Activated CD4-positive, alpha-beta memory T cell treated with anti-CD3 and anti-CD28 coated beads, Interleukin-2, amount 10 ng/mL, durations not matched to agents 7 days and 5 days (primary cell): ENCODE measurements at regions of chr11 and their contacts with region 1.

Region 1: DNA sequence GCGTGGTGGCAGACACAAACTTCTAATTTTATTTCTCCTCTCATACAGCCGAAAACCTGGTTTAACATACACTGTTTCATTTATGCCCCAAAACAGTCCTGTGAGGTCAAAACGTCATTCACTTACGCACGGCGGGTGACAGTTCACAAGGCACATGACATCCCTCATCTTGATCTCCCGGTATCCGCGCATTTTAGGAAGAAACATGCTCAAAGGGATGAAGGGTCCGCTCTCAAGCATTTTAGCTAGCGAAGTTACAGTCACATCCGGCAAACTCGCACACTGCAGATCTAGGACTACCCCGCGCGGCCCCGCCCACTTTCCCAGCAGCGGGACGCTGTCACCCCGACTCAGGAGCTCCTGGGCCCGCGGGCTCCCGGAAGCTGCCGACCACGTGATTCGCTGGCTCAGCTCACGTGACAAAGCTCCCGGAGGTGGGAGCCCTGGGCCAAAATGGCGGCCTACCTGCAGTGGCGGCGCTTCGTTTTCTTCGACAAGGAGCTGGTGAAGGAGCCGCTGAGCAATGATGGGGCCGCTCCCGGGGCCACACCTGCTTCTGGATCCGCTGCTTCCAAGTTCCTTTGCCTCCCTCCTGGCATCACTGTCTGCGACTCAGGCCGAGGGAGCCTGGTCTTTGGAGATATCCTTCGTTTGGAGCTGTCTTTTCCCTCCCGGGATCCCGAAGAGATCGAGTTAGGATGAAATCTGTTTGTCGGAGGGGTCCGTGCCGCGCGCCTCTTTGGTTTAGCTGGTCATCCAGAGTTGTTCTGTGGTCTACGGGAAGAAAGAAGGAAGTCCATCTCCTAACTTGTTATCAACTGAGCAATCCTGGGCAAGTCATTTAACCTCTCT is at the start of gene VPS11:
- DNase-seq: peak; percentile 98
- H3K4me3 Mint-ChIP-seq: peak within 1 kb of the TSS; percentile 98
- H3K27ac Mint-ChIP-seq: peak within 1 kb of the TSS; percentile 98
- H3K4me1 Mint-ChIP-seq: peaks cover 39% of the 10 kb centered on the region
- H3K27me3 Mint-ChIP-seq: no peaks in the 10 kb centered on the region
- total RNA-seq, gene VPS11: 30.6 to 36.1 TPM

Region 2: DNA sequence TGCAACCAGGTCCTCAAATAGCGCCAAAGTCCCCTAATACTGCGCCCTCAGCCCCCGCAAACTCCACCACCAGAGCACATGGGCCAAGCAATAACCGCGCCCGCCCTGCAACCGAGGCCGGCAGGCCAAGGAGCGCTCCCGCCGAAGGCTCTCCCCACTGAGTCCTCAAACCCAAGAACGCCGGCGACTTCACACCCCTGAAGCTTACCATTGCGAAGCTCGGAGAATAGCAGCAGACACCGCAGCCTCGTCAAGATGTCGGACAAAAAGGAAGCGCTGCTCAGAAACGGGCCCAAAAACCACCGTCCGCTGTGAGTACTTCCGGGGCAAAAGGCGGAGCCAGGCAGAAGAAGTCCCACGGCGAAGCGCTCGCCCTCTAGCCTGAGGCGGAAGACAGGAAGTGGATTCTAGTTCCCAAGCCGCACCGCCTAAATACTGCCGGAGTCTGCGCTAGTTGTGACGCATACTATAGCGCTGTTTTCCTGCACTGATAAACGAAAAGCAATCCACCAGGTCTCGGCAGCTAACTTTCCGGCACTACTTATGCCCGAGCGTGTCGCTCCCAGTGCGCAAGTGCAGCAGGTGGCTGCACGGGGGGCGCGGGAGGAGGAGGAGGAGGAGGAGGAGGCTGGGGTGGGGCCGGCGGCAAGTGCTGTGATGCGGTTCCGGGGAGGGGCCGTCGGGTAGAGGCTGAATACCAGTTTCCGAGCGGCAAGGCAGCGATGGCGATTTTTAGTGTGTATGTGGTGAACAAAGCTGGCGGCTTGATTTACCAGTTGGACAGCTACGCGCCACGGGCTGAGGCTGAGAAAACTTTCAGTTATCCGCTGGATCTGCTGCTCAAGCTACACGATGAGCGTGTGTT is 49.3 kb before region 1 on chr11 and contains the starts of genes RPS25 and TRAPPC4:
- CTCF ChIA-PET with region 1: interaction called, 7 read pairs
- POLR2A ChIA-PET with region 1: interaction called, 26 read pairs
- DNase-seq: peak; percentile 96
- H3K4me3 Mint-ChIP-seq: peak within 1 kb of the TSS; percentile 90
- H3K27ac Mint-ChIP-seq: peak within 1 kb of the TSS; percentile 100
- H3K4me1 Mint-ChIP-seq: peaks cover 56% of the 10 kb centered on the region
- H3K27me3 Mint-ChIP-seq: no peaks in the 10 kb centered on the region
- total RNA-seq, gene RPS25: 1,257 to 1,287 TPM
- total RNA-seq, gene TRAPPC4: 67.0 to 71.1 TPM

Region 3: GRCh38 chr11:119057000-119057769 is 10.4 kb before region 1 on chr11 and contains the start of gene HYOU1:
- CTCF ChIA-PET with region 1: interaction called, 21 read pairs
- POLR2A ChIA-PET with region 1: interaction called, 82 read pairs
- DNase-seq: peak; percentile 99
- H3K4me3 Mint-ChIP-seq: peak within 1 kb of the TSS; percentile 95
- H3K27ac Mint-ChIP-seq: peak within 1 kb of the TSS; percentile 91
- H3K4me1 Mint-ChIP-seq: peaks cover 52% of the 10 kb centered on the region
- H3K27me3 Mint-ChIP-seq: no peaks in the 10 kb centered on the region
- total RNA-seq, gene HYOU1: 123 to 125 TPM

Region 4: GRCh38 chr11:119084663-119085436 is 17.3 kb after region 1 on chr11 and contains the start of gene HMBS:
- CTCF ChIA-PET with region 1: interaction called, 21 read pairs
- POLR2A ChIA-PET with region 1: interaction called, 52 read pairs
- DNase-seq: peak; percentile 89
- H3K4me3 Mint-ChIP-seq: peak within 1 kb of the TSS; percentile 98
- H3K27ac Mint-ChIP-seq: peak within 1 kb of the TSS; percentile 91
- H3K4me1 Mint-ChIP-seq: peaks cover 47% of the 10 kb centered on the region
- H3K27me3 Mint-ChIP-seq: no peaks in the 10 kb centered on the region
- total RNA-seq, gene HMBS: 17.3 to 18.8 TPM

Region 5: GRCh38 chr11:119101759-119102423 is 34.3 kb after region 1 on chr11 and contains the start of gene DPAGT1:
- CTCF ChIA-PET with region 1: interaction called, 12 read pairs
- POLR2A ChIA-PET with region 1: interaction called, 105 read pairs
- DNase-seq: peak; percentile 89
- H3K4me3 Mint-ChIP-seq: peak within 1 kb of the TSS; percentile 92
- H3K27ac Mint-ChIP-seq: peak within 1 kb of the TSS; percentile 99
- H3K4me1 Mint-ChIP-seq: peaks cover 56% of the 10 kb centered on the region
- H3K27me3 Mint-ChIP-seq: no peaks in the 10 kb centered on the region
- total RNA-seq, gene DPAGT1: 57.3 to 58.4 TPM

Region 6: GRCh38 chr11:119205574-119206510 is 138.2 kb after region 1 on chr11 and contains the start of gene CBL:
- CTCF ChIA-PET with region 1: interaction called, 6 read pairs
- POLR2A ChIA-PET with region 1: interaction called, 10 read pairs
- DNase-seq: peak; percentile 97
- H3K4me3 Mint-ChIP-seq: peak within 1 kb of the TSS; percentile 94
- H3K27ac Mint-ChIP-seq: peak within 1 kb of the TSS; percentile 79
- H3K4me1 Mint-ChIP-seq: peaks cover 34% of the 10 kb centered on the region
- H3K27me3 Mint-ChIP-seq: no peaks in the 10 kb centered on the region
- total RNA-seq, gene CBL: 45.0 to 47.0 TPM

Region 7: GRCh38 chr11:119389611-119390254 is 322.1 kb after region 1 on chr11:
- CTCF ChIA-PET with region 1: no interaction called
- POLR2A ChIA-PET with region 1: no interaction called
- DNase-seq: no peak
- H3K4me3 Mint-ChIP-seq: no peak overlapping the region
- H3K27ac Mint-ChIP-seq: no peak overlapping the region
- H3K4me1 Mint-ChIP-seq: no peaks in the 10 kb centered on the region
- H3K27me3 Mint-ChIP-seq: peaks cover 19% of the 10 kb centered on the region